Caco-2 (cell line): ENCODE measurements at regions of chr4 and their contacts with region 1.

Region 1: DNA sequence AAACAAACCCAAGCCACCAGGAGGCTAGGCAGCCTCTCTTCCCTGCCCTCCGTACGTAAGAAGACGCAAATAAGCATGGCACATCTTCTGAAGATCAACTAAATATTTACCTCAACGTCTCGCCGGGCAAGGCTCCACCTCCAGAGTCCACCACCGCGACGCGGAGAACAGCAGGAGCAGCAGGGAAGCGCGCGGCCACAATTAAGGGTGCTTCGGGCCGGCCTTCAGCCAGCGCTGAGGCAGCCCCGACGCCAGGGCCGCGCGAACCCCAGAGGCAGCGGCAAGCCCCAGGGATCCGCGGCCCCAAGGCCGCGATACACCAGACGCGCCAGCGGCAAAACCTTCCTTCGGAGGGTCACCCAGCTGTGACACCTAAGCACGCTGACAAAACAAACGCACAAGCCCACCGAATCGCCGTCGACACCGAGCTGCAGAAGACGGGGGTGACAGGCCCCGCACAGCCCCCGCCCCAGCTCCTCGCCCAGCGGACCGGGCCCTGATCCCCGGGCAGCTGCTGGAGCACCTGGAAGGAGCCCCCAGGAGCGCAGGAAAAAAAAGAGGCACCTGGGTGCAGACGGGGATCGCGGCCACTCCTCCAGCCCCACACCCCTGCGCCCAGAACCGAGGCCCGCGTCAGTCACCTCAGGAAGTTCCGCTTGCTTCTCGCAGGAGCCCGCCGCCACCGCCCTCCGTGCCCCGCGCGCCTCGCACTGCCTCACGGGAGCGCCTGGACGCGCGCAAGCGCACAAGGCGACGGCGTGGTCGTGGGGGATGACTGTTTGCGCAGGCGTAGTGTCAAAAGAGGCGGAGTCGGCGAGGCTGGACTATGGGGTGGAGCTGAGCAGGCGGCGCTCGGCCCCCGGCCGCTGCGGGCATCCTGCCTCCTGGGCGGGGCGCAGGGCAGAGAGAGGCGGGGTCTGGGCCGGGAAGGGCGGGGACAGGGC is at the starts of genes HAUS3 and POLN:
- DNase-seq: peak; percentile 97 to 98
- H3K4me3 ChIP-seq: peak within 1 kb of the TSS; percentile 90
- H3K4me3 Mint-ChIP-seq: peak within 1 kb of the TSS; percentile 77
- H3K27ac Mint-ChIP-seq: peak within 1 kb of the TSS; percentile 4
- H3K4me1 ChIP-seq: peaks cover 14% of the 10 kb centered on the region; the same call in 1 of the 2 replicates
- H3K4me1 Mint-ChIP-seq: peaks cover 23% of the 10 kb centered on the region
- H3K27me3 ChIP-seq: no peaks in the 10 kb centered on the region
- H3K27me3 Mint-ChIP-seq: no peaks in the 10 kb centered on the region
- CTCF ChIP-seq: no peak
- total RNA-seq, gene HAUS3: 17.7 and 17.9 TPM in 2 replicates
- total RNA-seq, gene POLN: 1.2 and 1.6 TPM in 2 replicates

Region 2: GRCh38 chr4:2262143-2262943 is 20.7 kb after region 1 on chr4:
- CTCF ChIA-PET with region 1: no interaction called
- POLR2A ChIA-PET with region 1: interaction called, 14 read pairs
- intact Hi-C with region 1: loop called (anchors 2 kb)
- DNase-seq: peak; percentile 98
- H3K4me3 ChIP-seq: peak overlapping the region; percentile 63
- H3K4me3 Mint-ChIP-seq: peak overlapping the region; percentile 72
- H3K27ac Mint-ChIP-seq: no peak overlapping the region
- H3K4me1 ChIP-seq: 0 out of 2 replicates have a peak, but pooled peaks cover 5% of the 10 kb centered on the region
- H3K4me1 Mint-ChIP-seq: no peaks in the 10 kb centered on the region
- H3K27me3 ChIP-seq: no peaks in the 10 kb centered on the region
- H3K27me3 Mint-ChIP-seq: no peaks in the 10 kb centered on the region
- CTCF ChIP-seq: no peak

Region 3: DNA sequence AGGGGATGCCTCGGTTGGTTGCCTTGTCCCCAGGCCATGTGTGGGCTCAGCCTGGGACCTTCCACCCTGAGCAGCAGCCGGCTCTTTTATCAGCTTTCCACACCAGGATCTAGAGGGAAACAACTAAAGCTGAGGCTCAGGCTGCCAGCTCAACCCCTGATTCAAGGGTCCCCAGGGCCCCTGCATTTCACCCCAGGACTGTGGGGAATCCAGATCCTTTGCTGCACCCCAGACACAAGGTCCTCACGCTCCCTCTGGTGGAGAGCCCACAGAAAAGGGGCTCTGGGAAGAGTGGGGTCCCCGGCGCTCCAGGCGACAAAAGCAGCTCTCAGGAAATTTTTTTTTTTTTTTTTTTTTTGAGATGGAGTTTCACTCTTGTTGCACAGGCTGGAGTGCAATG is 112.4 kb after region 1 on chr4:
- CTCF ChIA-PET with region 1: no interaction called
- POLR2A ChIA-PET with region 1: no interaction called
- intact Hi-C with region 1: loop called (anchors 10 kb)
- DNase-seq: no peak
- H3K4me3 ChIP-seq: no peak overlapping the region
- H3K4me3 Mint-ChIP-seq: no peak overlapping the region
- H3K27ac Mint-ChIP-seq: no peak overlapping the region
- H3K4me1 ChIP-seq: no peaks in the 10 kb centered on the region
- H3K4me1 Mint-ChIP-seq: no peaks in the 10 kb centered on the region
- H3K27me3 ChIP-seq: no peaks in the 10 kb centered on the region
- H3K27me3 Mint-ChIP-seq: no peaks in the 10 kb centered on the region
- CTCF ChIP-seq: peak in 1 of 2 experiments; percentile 40

Region 4: GRCh38 chr4:2462218-2462991 is 220.7 kb after region 1 on chr4:
- CTCF ChIA-PET with region 1: interaction called, 3 read pairs
- POLR2A ChIA-PET with region 1: no interaction called
- intact Hi-C with region 1: loop called (anchors 5 kb)
- DNase-seq: peak in 1 of 2 experiments; percentile 84
- H3K4me3 ChIP-seq: peak overlapping the region; percentile 33
- H3K4me3 Mint-ChIP-seq: peak overlapping the region; percentile 70
- H3K27ac Mint-ChIP-seq: peak overlapping the region; percentile 39
- H3K4me1 ChIP-seq: peaks cover 3% of the 10 kb centered on the region; the same call in 1 of the 2 replicates
- H3K4me1 Mint-ChIP-seq: peaks cover 8% of the 10 kb centered on the region
- H3K27me3 ChIP-seq: no peaks in the 10 kb centered on the region
- H3K27me3 Mint-ChIP-seq: no peaks in the 10 kb centered on the region
- CTCF ChIP-seq: peak; percentile 26 to 54

Region 5: GRCh38 chr4:2725380-2725779 is 483.7 kb after region 1 on chr4:
- CTCF ChIA-PET with region 1: interaction called, 12 read pairs
- POLR2A ChIA-PET with region 1: no interaction called
- intact Hi-C with region 1: no loop called
- DNase-seq: no peak
- H3K4me3 ChIP-seq: no peak overlapping the region
- H3K4me3 Mint-ChIP-seq: no peak overlapping the region
- H3K27ac Mint-ChIP-seq: no peak overlapping the region
- H3K4me1 ChIP-seq: no peaks in the 10 kb centered on the region
- H3K4me1 Mint-ChIP-seq: no peaks in the 10 kb centered on the region
- H3K27me3 ChIP-seq: no peaks in the 10 kb centered on the region
- H3K27me3 Mint-ChIP-seq: no peaks in the 10 kb centered on the region
- CTCF ChIP-seq: no peak